Activated CD4-positive, alpha-beta T cell treated with anti-CD3 and anti-CD28 coated beads, Interleukin-2, amount 10 ng/mL, durations not matched to agents 24 days and 14 days (primary cell): ENCODE measurements at regions of chr11 and their contacts with region 1.

Region 1: DNA sequence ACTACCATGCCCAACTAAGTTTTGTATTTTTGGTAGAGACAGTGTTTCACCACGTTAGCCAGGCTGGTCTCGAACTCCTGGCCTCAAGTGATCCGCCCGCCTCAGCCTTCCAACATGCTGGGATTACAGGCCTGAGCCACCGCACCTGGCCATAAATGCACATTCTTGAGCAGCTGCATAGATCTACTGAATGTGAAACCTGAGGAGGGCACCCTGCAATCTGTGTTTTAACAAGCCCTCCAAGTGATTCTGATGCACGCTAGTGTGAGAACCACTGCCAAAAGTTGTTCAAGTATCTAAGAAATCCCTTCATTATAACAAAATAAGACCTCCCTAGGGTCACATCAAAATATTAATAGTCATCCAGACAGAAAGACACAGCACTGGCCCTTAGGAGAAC is 89.3 kb downstream of the RDX start:
- DNase-seq: peak; percentile 49
- H3K4me3 Mint-ChIP-seq: no peak overlapping the region
- H3K27ac Mint-ChIP-seq: no peak overlapping the region
- H3K4me1 Mint-ChIP-seq: no peaks in the 10 kb centered on the region
- H3K27me3 Mint-ChIP-seq: peaks cover 4% of the 10 kb centered on the region

Region 2: GRCh38 chr11:110141812-110142211 is 65.3 kb before region 1 on chr11:
- intact Hi-C with region 1: no loop called
- DNase-seq: no peak
- H3K4me3 Mint-ChIP-seq: no peak overlapping the region
- H3K27ac Mint-ChIP-seq: no peak overlapping the region
- H3K4me1 Mint-ChIP-seq: no peaks in the 10 kb centered on the region
- H3K27me3 Mint-ChIP-seq: peaks cover 11% of the 10 kb centered on the region

Region 3: DNA sequence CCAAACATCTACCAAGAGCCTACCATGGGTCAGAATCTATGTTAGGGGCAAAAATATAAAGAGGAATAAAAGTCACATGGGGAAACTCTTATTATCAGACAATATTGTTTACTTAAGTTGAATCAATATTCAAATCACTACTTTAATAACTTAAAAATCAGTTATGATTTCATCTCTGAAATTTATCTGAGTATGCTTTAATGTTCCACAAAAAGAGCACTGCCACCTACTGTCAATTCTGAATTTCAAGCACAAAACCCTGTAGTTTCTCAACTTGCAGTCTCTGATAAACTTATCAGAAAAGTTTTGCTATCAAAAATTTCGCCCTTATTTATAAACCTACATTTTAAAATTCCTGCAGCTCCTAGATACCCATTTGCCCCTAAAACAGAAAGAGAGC is 41.9 kb after region 1 on chr11:
- intact Hi-C with region 1: loop called (anchors 5 kb)
- DNase-seq: no peak
- H3K4me3 Mint-ChIP-seq: no peak overlapping the region
- H3K27ac Mint-ChIP-seq: no peak overlapping the region
- H3K4me1 Mint-ChIP-seq: peaks cover 3% of the 10 kb centered on the region
- H3K27me3 Mint-ChIP-seq: no peaks in the 10 kb centered on the region

Region 4: DNA sequence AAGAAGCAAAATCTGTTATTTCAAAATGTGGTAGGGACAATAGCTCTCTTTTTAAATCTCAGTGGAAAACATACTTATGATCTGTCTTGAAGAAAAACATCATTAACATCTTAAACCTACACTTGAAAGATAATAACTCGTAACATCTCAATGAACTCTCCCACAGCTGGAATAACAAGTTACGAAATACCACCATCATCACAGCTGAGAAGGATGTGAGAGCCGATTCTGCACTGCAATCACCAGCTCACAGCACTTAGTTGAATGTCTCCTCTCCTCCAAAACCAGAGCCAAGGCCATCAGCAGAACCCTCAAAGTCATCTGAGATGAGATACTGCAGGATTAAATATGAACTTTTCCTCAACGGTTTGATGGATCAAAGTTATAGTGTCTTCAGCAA is 380.8 kb after region 1 on chr11:
- intact Hi-C with region 1: no loop called
- DNase-seq: no peak
- H3K4me3 Mint-ChIP-seq: no peak overlapping the region
- H3K27ac Mint-ChIP-seq: no peak overlapping the region
- H3K4me1 Mint-ChIP-seq: no peaks in the 10 kb centered on the region
- H3K27me3 Mint-ChIP-seq: peaks cover 9% of the 10 kb centered on the region